ENCODE measurements at regions of chr19 and their contacts with region 1.

Region 1: DNA sequence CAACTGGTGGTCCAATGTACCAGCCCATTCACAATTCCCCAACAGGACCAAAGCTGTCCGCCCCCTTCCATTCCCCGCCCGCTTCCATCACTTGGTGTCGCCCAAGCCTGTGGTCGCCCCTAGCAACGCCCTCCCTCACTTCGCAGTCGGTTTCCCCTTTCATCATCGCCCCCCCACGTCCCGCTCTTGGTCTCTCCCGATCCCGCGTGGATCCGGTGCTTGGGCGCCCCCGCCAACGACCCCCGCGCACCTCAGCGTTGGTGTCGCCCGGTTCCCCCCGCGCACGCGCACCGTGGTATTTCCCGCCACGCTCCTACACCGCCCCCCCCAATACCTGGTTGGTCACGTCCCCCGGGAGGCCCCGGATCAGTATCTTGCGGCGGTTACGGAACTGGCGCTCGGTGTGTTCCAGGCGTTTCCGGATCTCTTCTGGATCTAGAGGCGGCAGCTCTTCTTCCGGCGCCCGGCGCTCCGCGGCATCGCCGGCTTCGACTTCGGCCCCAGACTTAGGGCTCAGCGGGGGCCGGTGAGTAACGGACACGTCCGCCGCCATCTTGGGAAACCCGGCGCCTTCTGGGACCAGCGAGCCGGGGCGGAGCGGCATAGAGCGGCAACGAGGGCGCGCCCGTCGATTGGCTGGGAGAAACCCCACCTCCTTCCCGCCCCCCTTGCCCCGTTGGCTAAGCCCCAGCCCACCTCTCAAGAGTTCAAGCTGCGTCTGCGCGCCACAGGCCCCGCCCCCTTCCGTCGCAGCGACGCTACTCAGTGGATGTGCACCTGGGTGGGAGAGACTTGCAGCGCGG is at the start of gene RAVER1:
- DNase-seq: peak; percentile 92
- ATAC-seq: peak; percentile 81
- H3K4me3 ChIP-seq: peak within 1 kb of the TSS; percentile 77 to 93
- H3K27ac ChIP-seq: peak within 1 kb of the TSS; percentile 90
- H3K4me1 ChIP-seq: peaks cover 6 to 28% of the 10 kb centered on the region in 2 experiments; a peak in 3 of 4 replicates
- H3K27me3 ChIP-seq: no peaks in the 10 kb centered on the region
- CTCF ChIP-seq: no peak
- POLR2A ChIP-seq: peak; percentile 82
- RAD21 ChIP-seq: no peak
- total RNA-seq, gene RAVER1: 71.0 TPM

Region 2: DNA sequence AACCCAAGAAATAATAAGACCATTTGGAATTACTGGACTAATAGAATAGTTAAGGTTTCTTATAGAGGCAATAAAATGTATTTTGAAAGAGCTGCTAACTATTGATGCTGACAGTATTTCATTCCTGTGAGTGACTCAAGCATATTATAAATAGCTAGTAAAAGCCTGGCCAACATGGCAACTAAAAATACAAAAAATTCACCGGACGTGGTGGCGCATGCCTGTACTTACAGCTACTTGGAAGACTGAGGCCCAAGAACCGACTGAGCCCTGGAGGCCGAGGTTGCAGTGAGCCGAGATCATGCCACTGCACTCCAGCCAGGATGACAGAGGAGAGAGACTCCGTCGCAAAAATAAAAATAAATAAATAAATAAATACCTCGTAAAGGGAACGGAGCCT is 11.6 kb after region 1 on chr19:
- CTCF ChIA-PET with region 1: no interaction called
- POLR2A ChIA-PET with region 1: interaction called, 16 read pairs
- RAD21 ChIA-PET with region 1: no interaction called
- intact Hi-C with region 1: no loop called
- DNase-seq: no peak
- ATAC-seq: no peak
- H3K4me3 ChIP-seq: no peak overlapping the region
- H3K27ac ChIP-seq: no peak overlapping the region
- H3K4me1 ChIP-seq: peaks cover 0 to 14% of the 10 kb centered on the region in 2 experiments; a peak in 2 of 4 replicates
- H3K27me3 ChIP-seq: no peaks in the 10 kb centered on the region
- CTCF ChIP-seq: no peak
- POLR2A ChIP-seq: no peak
- RAD21 ChIP-seq: no peak

Region 3: GRCh38 chr19:10380313-10381102 is 47.4 kb after region 1 on chr19 and contains the start of gene TYK2:
- CTCF ChIA-PET with region 1: no interaction called
- POLR2A ChIA-PET with region 1: interaction called, 6 read pairs
- RAD21 ChIA-PET with region 1: no interaction called
- intact Hi-C with region 1: loop called (anchors 2 kb)
- DNase-seq: peak; percentile 96
- ATAC-seq: peak; percentile 94
- H3K4me3 ChIP-seq: peak within 1 kb of the TSS; percentile 80 to 96
- H3K27ac ChIP-seq: peak within 1 kb of the TSS; percentile 86
- H3K4me1 ChIP-seq: peaks cover 2 to 13% of the 10 kb centered on the region in 2 experiments; a peak in 3 of 4 replicates
- H3K27me3 ChIP-seq: no peaks in the 10 kb centered on the region
- CTCF ChIP-seq: no peak
- POLR2A ChIP-seq: peak; percentile 74
- RAD21 ChIP-seq: no peak
- total RNA-seq, gene TYK2: 110 TPM